Mammary epithelial cell (primary cell): ENCODE measurements at regions of chr11 and their contacts with region 1.

Region 1: DNA sequence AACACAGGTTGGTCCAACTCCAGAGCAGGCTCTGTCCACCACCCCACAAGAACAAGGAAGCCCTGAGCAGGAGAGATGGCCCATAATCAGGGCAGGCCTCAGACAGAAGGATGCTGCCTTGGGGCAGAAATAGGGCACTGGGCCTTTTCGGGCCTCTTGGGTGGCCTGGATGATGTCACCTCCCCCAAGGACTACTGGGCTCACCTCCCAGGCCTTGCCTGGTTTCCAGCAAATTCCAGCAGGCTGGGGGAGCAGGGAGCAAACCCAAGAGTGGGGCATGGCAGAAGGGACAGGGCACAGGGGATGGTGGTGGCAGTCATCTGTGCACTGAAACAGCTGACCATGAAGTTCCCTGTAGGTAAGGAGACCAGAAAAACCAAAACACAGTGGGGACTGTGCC is 5.3 kb upstream of the NAA40 start:
- DNase-seq: no peak
- H3K4me3 ChIP-seq: no peak overlapping the region
- H3K27ac ChIP-seq: no peak overlapping the region
- H3K4me1 ChIP-seq: peaks cover 9% of the 10 kb centered on the region
- H3K27me3 ChIP-seq: no peaks in the 10 kb centered on the region
- CTCF ChIP-seq: no peak

Region 2: GRCh38 chr11:63871962-63872799 is 61.3 kb before region 1 on chr11:
- CTCF ChIA-PET with region 1: no interaction called
- dilution Hi-C with region 1: no loop called
- in situ Hi-C with region 1: no loop called
- intact Hi-C with region 1: no loop called
- DNase-seq: peak; percentile 93
- H3K4me3 ChIP-seq: no peak overlapping the region
- H3K27ac ChIP-seq: no peak overlapping the region
- H3K4me1 ChIP-seq: peaks cover 38% of the 10 kb centered on the region
- H3K27me3 ChIP-seq: no peaks in the 10 kb centered on the region
- CTCF ChIP-seq: peak in 1 of 2 donors; percentile 49

Region 3: DNA sequence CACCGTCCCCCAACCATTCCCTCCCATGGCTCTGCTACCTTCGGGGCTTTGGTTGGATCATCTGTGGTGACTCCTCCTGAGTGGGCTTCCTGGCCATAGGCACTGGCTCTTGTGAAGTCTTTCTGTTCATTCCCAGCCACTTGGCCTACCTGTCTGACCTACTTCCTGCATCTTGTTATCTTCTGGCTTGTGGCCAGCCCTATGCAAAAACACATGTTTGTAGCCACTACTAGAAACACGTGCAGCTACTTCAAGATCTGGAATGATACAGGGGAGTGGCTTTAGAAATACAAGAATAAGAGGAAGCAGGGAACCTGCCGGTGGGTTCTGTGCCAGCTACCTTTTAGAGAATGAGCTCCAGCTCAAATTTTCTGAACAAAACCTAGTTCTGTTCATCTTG is 37.4 kb before region 1 on chr11:
- CTCF ChIA-PET with region 1: no interaction called
- dilution Hi-C with region 1: loop called (anchors 5 kb)
- in situ Hi-C with region 1: no loop called
- intact Hi-C with region 1: no loop called
- DNase-seq: no peak
- H3K4me3 ChIP-seq: no peak overlapping the region
- H3K27ac ChIP-seq: no peak overlapping the region
- H3K4me1 ChIP-seq: no peaks in the 10 kb centered on the region
- H3K27me3 ChIP-seq: no peaks in the 10 kb centered on the region
- CTCF ChIP-seq: no peak

Region 4: GRCh38 chr11:63966444-63966843 is 33.0 kb after region 1 on chr11:
- CTCF ChIA-PET with region 1: no interaction called
- dilution Hi-C with region 1: loop called (anchors 5 kb)
- in situ Hi-C with region 1: no loop called
- intact Hi-C with region 1: no loop called
- DNase-seq: no peak
- H3K4me3 ChIP-seq: no peak overlapping the region
- H3K27ac ChIP-seq: no peak overlapping the region
- H3K4me1 ChIP-seq: peaks cover 9% of the 10 kb centered on the region
- H3K27me3 ChIP-seq: no peaks in the 10 kb centered on the region
- CTCF ChIP-seq: no peak

Region 5: DNA sequence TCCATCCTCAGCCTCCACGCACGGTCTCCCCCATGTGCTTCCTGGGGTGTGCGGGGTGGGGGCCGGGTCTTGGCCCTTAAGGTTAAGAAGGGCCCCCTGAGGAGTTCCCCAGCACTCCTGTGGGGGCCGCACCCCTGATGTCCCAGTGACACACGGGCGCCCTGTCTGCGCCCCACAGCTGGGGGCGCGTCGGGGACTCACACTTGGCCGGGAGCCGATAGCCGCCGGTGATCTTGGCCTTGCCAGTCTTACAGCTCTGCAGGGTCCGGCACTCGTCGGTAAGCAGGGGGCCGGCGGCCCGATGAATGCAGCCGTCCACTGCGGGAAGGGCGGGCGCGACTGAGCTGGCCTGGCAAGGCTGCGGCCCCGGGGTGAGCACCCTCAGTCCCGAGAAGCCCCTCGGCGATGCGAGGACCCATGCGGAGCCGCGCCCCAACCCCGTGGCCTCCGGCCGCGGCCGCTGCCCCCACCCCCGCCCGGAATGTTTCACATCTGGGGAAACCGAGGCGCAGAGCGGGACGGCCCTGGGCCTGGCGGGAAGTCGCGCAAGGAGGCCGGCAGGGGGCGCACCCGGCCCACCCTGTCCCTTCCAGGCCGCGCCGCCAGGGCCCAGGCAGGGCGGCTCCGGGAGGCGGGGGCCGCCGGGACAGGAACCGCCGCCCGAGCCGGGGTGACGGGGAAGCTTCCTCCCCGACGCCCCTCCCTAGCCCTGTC is 66.7 kb after region 1 on chr11:
- CTCF ChIA-PET with region 1: no interaction called
- dilution Hi-C with region 1: loop called (anchors 5 kb)
- in situ Hi-C with region 1: no loop called
- intact Hi-C with region 1: no loop called
- DNase-seq: peak; percentile 35
- H3K4me3 ChIP-seq: peak overlapping the region in 1 of 3 experiments; percentile 30
- H3K27ac ChIP-seq: no peak overlapping the region
- H3K4me1 ChIP-seq: peaks cover 29% of the 10 kb centered on the region
- H3K27me3 ChIP-seq: no peaks in the 10 kb centered on the region
- CTCF ChIP-seq: peak; percentile 29 to 65

Region 6: DNA sequence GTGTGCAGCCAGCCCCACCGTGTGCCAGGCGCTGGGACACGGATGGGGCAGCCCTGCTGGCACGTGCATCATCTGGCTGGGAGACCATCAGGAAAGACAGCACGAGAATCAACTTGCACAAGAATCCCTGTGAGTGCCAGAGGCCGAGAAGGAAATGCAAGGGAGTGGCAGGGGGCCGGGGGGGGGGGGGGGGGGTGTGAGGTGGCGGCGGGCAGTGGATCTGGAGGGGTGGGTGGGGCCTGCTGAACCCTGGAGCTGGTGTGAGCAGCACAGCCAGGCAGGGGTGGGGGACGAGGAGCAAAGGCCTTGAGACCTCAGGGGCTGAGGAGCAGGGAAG is 88.3 kb after region 1 on chr11:
- CTCF ChIA-PET with region 1: no interaction called
- dilution Hi-C with region 1: no loop called
- in situ Hi-C with region 1: no loop called
- intact Hi-C with region 1: no loop called
- DNase-seq: no peak
- H3K4me3 ChIP-seq: no peak overlapping the region
- H3K27ac ChIP-seq: no peak overlapping the region
- H3K4me1 ChIP-seq: peaks cover 3% of the 10 kb centered on the region
- H3K27me3 ChIP-seq: peaks cover 3% of the 10 kb centered on the region
- CTCF ChIP-seq: no peak